Activated CD8-positive, alpha-beta T cell treated with anti-CD3 and anti-CD28 coated beads for 36 hours (primary cell): ENCODE measurements at regions of chr12 and their contacts with region 1.

Region 1: DNA sequence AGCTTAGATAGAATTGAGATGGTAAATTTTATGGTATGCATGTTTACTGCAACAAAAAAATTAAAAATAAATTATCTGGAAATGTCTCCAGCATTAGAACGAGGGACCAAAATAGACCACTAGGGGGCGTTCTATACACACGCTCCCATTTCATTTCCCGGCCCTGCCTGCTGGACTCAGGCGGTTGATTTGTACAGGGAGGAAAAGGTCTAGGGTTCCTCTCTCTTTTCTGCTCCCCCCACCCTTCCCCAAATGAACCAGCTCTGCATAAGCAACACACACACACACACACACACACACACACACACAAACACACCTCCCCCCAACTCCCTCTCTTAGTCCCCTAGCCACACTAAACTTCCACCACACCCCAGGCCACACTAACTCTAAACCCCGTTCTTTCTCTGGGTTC is 7.8 kb upstream of the DTX1 start:
- DNase-seq: peak; percentile 77
- ATAC-seq: peak; percentile 86
- H3K4me3 Mint-ChIP-seq: no peak overlapping the region
- H3K27ac Mint-ChIP-seq: no peak overlapping the region
- H3K4me1 Mint-ChIP-seq: peaks cover 4% of the 10 kb centered on the region
- H3K27me3 Mint-ChIP-seq: peaks cover 4% of the 10 kb centered on the region
- CTCF ChIP-seq: peak; percentile 80

Region 2: DNA sequence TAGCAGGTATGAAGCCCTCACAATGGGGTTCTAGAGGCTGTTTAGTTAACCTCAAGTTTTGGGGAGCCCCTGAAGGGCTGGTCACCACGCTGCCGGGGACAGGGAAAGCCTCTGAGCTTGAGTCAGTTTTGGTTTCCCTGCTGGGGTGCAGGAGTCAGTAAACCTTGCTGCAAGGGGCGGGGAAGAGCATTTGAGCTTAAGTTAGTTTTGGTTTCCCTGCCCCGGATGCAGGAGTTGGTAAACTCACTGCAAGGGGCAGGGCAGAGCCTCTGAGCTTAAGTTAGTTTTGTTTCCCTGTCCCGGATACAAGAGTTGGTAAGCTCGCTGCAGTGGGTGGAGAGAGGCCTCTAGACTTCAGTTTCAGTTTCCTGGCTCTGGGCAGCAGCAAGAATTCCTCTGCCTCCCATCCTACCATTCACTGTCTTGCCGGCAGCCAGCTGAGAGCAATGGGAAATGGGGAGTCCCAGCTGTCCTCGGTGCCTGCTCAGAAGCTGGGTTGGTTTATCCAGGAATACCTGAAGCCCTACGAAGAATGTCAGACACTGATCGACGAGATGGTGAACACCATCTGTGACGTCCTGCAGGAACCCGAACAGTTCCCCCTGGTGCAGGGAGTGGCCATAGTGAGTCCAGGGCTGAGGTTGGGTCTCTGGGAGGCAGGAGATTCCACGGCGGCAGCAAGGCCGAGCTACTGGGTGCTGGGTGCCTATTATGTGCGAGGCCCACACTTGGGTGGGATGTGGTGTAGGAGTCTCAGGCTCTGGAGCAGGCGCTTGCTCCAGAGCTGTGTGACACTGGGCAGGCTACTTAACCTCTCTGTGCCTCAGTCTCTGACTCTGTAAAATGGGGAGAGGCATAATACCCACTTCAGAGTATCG is 70.3 kb before region 1 on chr12 and contains the start of gene OAS2:
- CTCF ChIA-PET with region 1: no interaction called
- POLR2A ChIA-PET with region 1: no interaction called
- intact Hi-C with region 1: no loop called
- DNase-seq: peak; percentile 91
- ATAC-seq: peak; percentile 91
- H3K4me3 Mint-ChIP-seq: peak within 1 kb of the TSS; percentile 99
- H3K27ac Mint-ChIP-seq: peak within 1 kb of the TSS; percentile 99
- H3K4me1 Mint-ChIP-seq: peaks cover 35% of the 10 kb centered on the region
- H3K27me3 Mint-ChIP-seq: no peaks in the 10 kb centered on the region
- CTCF ChIP-seq: no peak
- total RNA-seq, gene OAS2: 95.7 to 104 TPM

Region 3: GRCh38 chr12:113062502-113063395 is 14.0 kb after region 1 on chr12:
- CTCF ChIA-PET with region 1: interaction called, 11 read pairs
- POLR2A ChIA-PET with region 1: interaction called, 4 read pairs
- intact Hi-C with region 1: no loop called
- DNase-seq: no peak
- ATAC-seq: no peak
- H3K4me3 Mint-ChIP-seq: no peak overlapping the region
- H3K27ac Mint-ChIP-seq: no peak overlapping the region
- H3K4me1 Mint-ChIP-seq: peaks cover 19% of the 10 kb centered on the region
- H3K27me3 Mint-ChIP-seq: no peaks in the 10 kb centered on the region
- CTCF ChIP-seq: no peak

Region 4: DNA sequence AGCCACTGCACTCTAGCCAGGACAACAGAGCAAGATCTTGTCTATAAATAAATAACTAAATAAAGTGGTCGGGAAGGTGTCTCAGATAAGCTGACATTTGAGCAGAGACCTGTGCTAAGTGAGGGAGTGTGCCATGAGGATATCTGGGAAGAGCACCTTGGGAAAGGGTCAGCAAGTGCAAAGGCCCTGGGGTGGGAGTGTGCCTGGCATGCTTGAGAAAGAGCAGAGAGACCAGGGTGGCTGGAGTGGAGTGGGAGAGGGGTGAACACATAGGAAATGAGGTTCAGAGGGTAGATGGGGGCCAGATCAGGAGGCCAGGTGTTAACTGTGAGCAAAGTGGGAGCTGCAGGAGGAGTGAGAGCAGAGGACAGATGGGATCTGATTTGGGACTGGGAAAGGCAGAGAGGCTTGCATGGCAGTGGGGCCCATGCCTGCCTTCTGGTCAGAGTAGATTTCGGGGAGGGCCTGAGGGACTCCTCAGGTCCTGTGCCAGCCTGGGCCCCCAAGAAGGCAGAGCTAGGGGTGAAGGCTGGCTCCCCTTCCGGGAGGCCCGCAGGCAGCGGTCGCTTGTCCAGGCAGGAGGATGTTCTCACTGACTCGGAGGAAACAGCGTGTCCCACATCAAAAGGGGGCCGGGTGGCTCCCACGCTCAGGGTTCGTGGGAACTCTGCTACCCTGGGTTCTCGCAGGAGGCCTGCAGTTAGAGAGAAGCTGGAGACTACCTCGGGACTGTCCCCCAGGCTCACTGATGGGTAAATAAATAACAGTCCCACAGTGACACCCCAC is 40.4 kb after region 1 on chr12:
- CTCF ChIA-PET with region 1: interaction called, 14 read pairs
- POLR2A ChIA-PET with region 1: no interaction called
- intact Hi-C with region 1: no loop called
- DNase-seq: peak; percentile 75
- ATAC-seq: peak; percentile 70
- H3K4me3 Mint-ChIP-seq: peak overlapping the region; percentile 63
- H3K27ac Mint-ChIP-seq: peak overlapping the region; percentile 87
- H3K4me1 Mint-ChIP-seq: peaks cover 63% of the 10 kb centered on the region
- H3K27me3 Mint-ChIP-seq: no peaks in the 10 kb centered on the region
- CTCF ChIP-seq: no peak

Region 5: GRCh38 chr12:113098446-113098896 is 49.7 kb after region 1 on chr12:
- CTCF ChIA-PET with region 1: interaction called, 91 read pairs
- POLR2A ChIA-PET with region 1: interaction called, 7 read pairs
- intact Hi-C with region 1: loop called (anchors 2 kb)
- DNase-seq: peak; percentile 89
- ATAC-seq: peak; percentile 96
- H3K4me3 Mint-ChIP-seq: no peak overlapping the region
- H3K27ac Mint-ChIP-seq: peak overlapping the region; percentile 61
- H3K4me1 Mint-ChIP-seq: peaks cover 13% of the 10 kb centered on the region
- H3K27me3 Mint-ChIP-seq: no peaks in the 10 kb centered on the region
- CTCF ChIP-seq: peak; percentile 93

Region 6: GRCh38 chr12:113145720-113146551 is 97.2 kb after region 1 on chr12:
- CTCF ChIA-PET with region 1: interaction called, 35 read pairs
- POLR2A ChIA-PET with region 1: no interaction called
- intact Hi-C with region 1: loop called (anchors 5 kb)
- DNase-seq: no peak
- ATAC-seq: no peak
- H3K4me3 Mint-ChIP-seq: no peak overlapping the region
- H3K27ac Mint-ChIP-seq: no peak overlapping the region
- H3K4me1 Mint-ChIP-seq: peaks cover 8% of the 10 kb centered on the region
- H3K27me3 Mint-ChIP-seq: peaks cover 2% of the 10 kb centered on the region
- CTCF ChIP-seq: no peak

Region 7: GRCh38 chr12:113152835-113153814 is 104.4 kb after region 1 on chr12:
- CTCF ChIA-PET with region 1: interaction called, 35 read pairs
- POLR2A ChIA-PET with region 1: no interaction called
- intact Hi-C with region 1: loop called (anchors 5 kb)
- DNase-seq: peak; percentile 83
- ATAC-seq: peak; percentile 83
- H3K4me3 Mint-ChIP-seq: peak overlapping the region; percentile 72
- H3K27ac Mint-ChIP-seq: peak overlapping the region; percentile 73
- H3K4me1 Mint-ChIP-seq: peaks cover 28% of the 10 kb centered on the region
- H3K27me3 Mint-ChIP-seq: peaks cover 21% of the 10 kb centered on the region
- CTCF ChIP-seq: peak; percentile 51

Region 8: GRCh38 chr12:113174461-113175384 is 126.0 kb after region 1 on chr12:
- CTCF ChIA-PET with region 1: interaction called, 77 read pairs
- POLR2A ChIA-PET with region 1: no interaction called
- intact Hi-C with region 1: no loop called
- DNase-seq: peak; percentile 87
- ATAC-seq: peak; percentile 95
- H3K4me3 Mint-ChIP-seq: no peak overlapping the region
- H3K27ac Mint-ChIP-seq: no peak overlapping the region
- H3K4me1 Mint-ChIP-seq: peaks cover 2% of the 10 kb centered on the region
- H3K27me3 Mint-ChIP-seq: no peaks in the 10 kb centered on the region
- CTCF ChIP-seq: peak; percentile 100

Region 9: GRCh38 chr12:113818833-113819232 is 770.1 kb after region 1 on chr12:
- CTCF ChIA-PET with region 1: no interaction called
- POLR2A ChIA-PET with region 1: no interaction called
- intact Hi-C with region 1: no loop called
- DNase-seq: no peak
- ATAC-seq: no peak
- H3K4me3 Mint-ChIP-seq: no peak overlapping the region
- H3K27ac Mint-ChIP-seq: no peak overlapping the region
- H3K4me1 Mint-ChIP-seq: no peaks in the 10 kb centered on the region
- H3K27me3 Mint-ChIP-seq: no peaks in the 10 kb centered on the region
- CTCF ChIP-seq: no peak